ENCODE measurements at regions of chr9 and their contacts with region 1.

Region 1: GRCh38 chr9:91193658-91194391 is 167.9 kb downstream of the AUH start:
- DNase-seq: peak; percentile 66
- H3K4me3 ChIP-seq: peak overlapping the region; percentile 52
- H3K27ac ChIP-seq: peak overlapping the region; percentile 85
- H3K4me1 ChIP-seq: peaks cover 40% of the 10 kb centered on the region
- CTCF ChIP-seq: no peak

Region 2: DNA sequence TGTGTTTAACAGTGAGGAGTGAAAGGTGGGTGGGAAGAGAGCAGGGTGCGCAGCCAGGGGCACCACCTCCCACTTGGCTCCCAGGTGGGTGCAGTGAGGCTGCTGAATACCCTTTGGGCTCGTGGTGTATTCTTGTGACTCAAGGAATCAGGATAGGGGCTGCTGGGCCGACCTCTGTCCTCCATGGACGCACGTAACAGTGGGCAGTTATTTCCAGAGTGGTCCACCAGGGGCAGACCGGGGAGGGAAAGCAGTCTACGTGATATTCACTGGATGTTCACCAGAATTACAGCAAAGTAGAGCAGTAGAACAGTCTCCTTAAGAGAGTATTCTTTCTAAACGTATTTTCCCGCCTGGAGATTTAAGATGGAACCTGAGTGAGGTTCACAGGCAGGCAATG is 303.7 kb before region 1 on chr9:
- CTCF ChIA-PET with region 1: no interaction called
- POLR2A ChIA-PET with region 1: no interaction called
- intact Hi-C with region 1: no loop called
- DNase-seq: no peak
- H3K4me3 ChIP-seq: no peak overlapping the region
- H3K27ac ChIP-seq: no peak overlapping the region
- H3K4me1 ChIP-seq: peaks cover 3% of the 10 kb centered on the region
- CTCF ChIP-seq: 0 out of 2 replicates have a peak, but pooled peaks have one; percentile 16

Region 3: GRCh38 chr9:91036826-91037510 is 156.9 kb before region 1 on chr9:
- CTCF ChIA-PET with region 1: no interaction called
- POLR2A ChIA-PET with region 1: no interaction called
- intact Hi-C with region 1: loop called (anchors 5 kb)
- DNase-seq: peak; percentile 72
- H3K4me3 ChIP-seq: no peak overlapping the region
- H3K27ac ChIP-seq: peak overlapping the region; percentile 83
- H3K4me1 ChIP-seq: peaks cover 46% of the 10 kb centered on the region
- CTCF ChIP-seq: peak; percentile 68

Region 4: GRCh38 chr9:91164724-91165520 is 28.9 kb before region 1 on chr9:
- CTCF ChIA-PET with region 1: no interaction called
- POLR2A ChIA-PET with region 1: no interaction called
- intact Hi-C with region 1: loop called (anchors 2 kb)
- DNase-seq: no peak
- H3K4me3 ChIP-seq: no peak overlapping the region
- H3K27ac ChIP-seq: no peak overlapping the region
- H3K4me1 ChIP-seq: peaks cover 22% of the 10 kb centered on the region
- CTCF ChIP-seq: no peak

Region 5: GRCh38 chr9:91177661-91178280 is 16.1 kb before region 1 on chr9:
- CTCF ChIA-PET with region 1: no interaction called
- POLR2A ChIA-PET with region 1: interaction called, 12 read pairs
- intact Hi-C with region 1: no loop called
- DNase-seq: no peak
- H3K4me3 ChIP-seq: no peak overlapping the region
- H3K27ac ChIP-seq: no peak overlapping the region
- H3K4me1 ChIP-seq: peaks cover 40% of the 10 kb centered on the region
- CTCF ChIP-seq: no peak

Region 6: DNA sequence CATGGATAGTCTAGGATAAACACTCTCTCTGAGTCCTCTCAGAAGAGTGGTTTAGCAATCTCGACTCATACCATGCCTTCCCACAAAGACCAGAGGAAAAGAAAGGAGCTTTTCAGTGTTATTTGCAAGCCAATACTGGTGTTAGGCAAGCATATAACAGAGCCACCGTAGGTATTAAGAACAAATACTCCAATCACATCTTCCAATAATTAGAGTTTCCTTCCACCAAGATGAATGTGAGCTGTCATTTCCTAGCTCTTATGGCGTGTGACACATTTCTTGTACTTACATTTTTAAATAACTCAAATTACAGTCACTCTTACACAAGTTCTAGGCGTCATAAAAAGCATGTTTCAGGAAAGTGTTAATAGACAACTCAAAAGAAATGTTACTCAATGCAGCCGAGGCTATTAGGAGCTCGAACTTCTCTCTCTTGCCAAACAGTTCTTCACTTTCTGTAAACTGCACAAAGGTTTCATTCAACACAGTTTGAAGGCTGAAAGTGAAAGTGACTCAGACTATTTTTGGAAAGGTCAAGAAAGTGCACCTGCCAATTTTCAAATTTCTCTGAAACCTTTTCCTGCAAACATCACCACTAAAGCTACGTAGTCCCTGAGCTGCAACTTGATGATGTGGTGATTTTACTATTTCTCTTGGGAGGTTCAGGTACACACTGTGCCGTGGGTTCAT is 14.0 kb after region 1 on chr9:
- CTCF ChIA-PET with region 1: no interaction called
- POLR2A ChIA-PET with region 1: interaction called, 19 read pairs
- intact Hi-C with region 1: loop called (anchors 1 kb)
- DNase-seq: peak; percentile 94
- H3K4me3 ChIP-seq: peak overlapping the region; percentile 51
- H3K27ac ChIP-seq: peak overlapping the region; percentile 95
- H3K4me1 ChIP-seq: peaks cover 46% of the 10 kb centered on the region
- CTCF ChIP-seq: no peak

Region 7: DNA sequence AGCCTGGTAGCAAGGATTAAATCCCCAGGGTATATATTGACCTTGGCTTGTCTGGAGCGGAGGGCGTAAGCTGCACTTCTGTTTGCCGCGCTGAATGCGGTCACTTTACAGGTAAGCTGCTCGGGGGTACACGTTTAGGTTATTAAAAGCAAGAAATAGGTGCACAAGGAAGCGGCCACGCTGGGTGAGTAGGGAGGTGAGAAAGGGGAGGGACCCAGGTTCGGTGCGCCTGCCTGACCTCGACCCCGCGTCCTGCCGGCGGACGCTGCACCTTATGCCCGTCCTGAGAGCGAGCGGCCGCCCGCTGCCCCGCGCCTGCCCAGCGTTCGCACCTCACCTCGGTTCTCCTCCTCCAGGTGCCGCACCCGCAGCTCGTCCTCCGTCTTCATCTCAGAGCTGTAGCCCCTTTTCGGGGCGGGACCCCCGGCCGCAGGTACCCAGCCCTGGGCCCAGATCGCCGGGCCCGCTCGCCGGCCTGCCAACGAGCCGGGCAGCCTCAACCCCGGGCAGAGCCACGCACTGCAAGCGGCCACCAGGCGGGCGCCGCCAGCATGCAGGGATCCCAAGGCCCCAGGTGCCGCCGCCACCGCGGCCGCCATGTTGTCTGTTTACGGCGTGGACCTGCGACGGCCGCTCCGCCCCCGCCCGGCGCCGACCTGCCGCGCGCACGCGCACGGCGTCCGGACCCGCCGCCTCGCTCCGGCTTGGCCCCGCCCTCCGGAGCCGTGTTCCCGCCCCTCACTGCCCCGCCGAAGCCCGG is 167.6 kb after region 1 on chr9 and contains the start of gene AUH:
- CTCF ChIA-PET with region 1: no interaction called
- POLR2A ChIA-PET with region 1: no interaction called
- intact Hi-C with region 1: loop called (anchors 5 kb)
- DNase-seq: peak; percentile 89
- H3K4me3 ChIP-seq: peak within 1 kb of the TSS; percentile 80
- H3K27ac ChIP-seq: peak within 1 kb of the TSS; percentile 22
- H3K4me1 ChIP-seq: peaks cover 25% of the 10 kb centered on the region
- CTCF ChIP-seq: no peak
- total RNA-seq, gene AUH: 24.5 and 31.7 TPM in 2 replicates

Region 8: DNA sequence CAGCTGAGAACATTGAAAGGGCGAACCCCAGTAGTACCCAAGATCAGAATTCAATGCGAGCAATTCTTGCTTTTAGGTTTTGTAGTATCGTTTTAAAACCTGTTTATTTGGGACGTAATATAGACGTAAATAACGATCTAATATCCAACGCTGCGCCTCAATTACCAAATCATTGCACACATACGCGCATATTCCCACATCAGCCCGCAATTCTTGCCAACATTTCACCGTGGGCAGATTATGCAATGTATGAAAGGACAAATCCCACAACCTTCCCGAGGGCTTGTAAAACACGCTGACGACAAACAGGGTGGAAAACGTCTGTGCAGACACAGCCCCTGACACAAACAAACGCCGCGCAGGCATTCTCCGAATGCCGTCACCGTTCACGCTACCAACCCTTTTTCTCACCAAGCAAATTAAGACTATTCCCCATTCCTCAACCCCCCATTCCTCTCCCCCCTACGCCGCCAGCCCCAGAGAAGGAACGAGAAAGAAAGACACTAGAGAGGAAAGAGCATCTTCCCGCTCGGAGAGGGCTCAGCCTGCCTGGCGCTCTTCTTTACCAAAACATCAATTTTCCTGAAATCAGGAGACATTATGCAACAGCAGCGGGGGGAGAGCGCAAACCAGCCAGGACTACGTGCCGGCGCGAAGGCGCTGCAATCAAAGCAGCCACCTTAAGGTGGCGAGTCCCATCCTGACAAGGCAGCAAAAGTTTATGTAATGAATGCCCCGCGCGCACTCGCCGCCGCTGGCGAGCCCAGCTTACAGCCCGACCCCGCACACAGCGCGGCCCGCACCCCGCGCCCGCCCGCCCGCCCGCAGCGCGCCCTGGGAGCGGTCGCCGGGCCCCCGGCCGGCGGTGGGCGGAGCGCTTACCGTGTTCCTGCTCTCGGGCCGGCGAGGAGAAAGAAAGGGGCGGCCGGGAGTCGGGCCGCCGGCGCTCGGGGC is 229.2 kb after region 1 on chr9:
- CTCF ChIA-PET with region 1: interaction called, 4 read pairs
- POLR2A ChIA-PET with region 1: no interaction called
- intact Hi-C with region 1: loop called (anchors 2 kb)
- DNase-seq: peak; percentile 76
- H3K4me3 ChIP-seq: peak overlapping the region; percentile 85
- H3K27ac ChIP-seq: no peak overlapping the region
- H3K4me1 ChIP-seq: peaks cover 22% of the 10 kb centered on the region
- CTCF ChIP-seq: peak; percentile 49

Measured in OCI-LY7 (cell line).